Ascending aorta (tissue), 2 donors: ENCODE measurements at regions of chr9 and their contacts with region 1.

Region 1: DNA sequence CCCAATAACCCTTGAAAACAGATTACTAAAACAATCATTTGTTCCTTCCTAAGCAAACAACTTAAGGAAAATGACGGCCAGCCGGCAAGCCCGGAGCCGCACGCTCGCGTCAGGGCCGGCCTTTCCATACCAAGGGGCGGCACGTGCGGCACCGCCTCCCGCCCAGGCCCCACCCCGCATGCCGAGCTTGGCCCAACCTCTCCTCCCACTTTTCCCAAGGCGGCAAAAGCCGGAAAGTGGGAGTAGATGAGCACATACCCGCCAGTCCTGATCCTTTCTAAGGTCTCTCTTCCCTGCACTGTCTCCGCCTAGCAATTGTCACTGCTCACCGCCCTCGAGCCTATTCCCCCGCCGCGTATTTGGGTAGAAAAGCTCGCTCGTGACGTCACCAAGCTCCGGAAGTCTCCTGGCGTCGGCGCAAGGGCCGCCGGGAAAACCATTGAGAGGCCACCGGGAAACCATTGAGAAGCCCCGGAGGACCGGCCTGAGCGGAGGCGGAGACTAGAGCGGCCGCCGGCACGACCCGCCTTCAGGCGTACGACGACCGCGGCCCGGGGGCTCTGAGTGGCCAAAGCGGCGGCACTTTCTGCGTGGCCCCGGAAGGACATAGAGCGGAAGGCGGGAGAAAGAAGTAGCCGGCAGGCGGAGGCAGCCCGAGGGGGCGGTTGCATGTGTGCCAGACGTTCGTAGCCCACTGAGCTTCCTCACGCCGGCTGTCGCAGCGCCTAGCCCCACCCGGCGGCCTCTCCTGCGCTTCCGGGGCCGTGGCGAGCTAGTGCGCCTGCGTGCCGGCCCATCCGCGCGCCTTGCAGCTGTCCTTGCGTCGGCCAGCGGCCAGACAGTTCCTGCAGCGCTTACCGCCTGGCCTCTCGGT is at the starts of genes NCBP1 and TSTD2:
- DNase-seq: peak; percentile 91 to 98
- H3K4me3 ChIP-seq: peak within 1 kb of the TSS; percentile 81 to 89
- H3K27ac ChIP-seq: peak within 1 kb of the TSS; percentile 97 to 98
- H3K4me1 ChIP-seq: peaks cover 10 to 25% of the 10 kb centered on the region in 2 donors
- H3K27me3 ChIP-seq: no peaks in the 10 kb centered on the region
- CTCF ChIP-seq: no peak
- total RNA-seq, gene NCBP1: 5.1 TPM
- total RNA-seq, gene TSTD2: 1.4 TPM

Region 2: DNA sequence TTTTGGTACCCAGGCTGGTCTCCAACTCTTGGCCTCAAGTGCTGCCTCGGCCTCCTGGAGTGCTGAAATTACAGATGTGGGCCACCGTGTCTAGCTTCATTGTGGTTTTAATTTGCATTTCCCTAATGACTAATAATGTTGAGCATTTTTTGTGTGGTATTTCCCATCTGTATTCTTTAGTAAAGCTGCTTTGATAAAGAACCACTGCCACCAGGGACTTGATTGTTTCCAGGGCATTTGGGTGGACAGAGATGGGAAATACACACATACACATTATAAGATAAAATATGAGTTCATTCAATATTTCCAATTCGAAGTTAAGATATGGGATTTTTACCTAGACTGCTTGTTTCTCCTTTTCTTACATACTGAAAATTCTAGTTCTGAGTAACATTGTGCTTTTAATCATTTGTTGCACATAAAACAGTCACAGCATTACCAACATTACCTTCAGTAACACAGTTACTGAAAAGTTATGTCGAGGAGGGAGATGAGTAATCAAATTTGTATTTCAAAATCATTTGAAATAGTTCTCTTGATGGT is 1154.3 kb before region 1 on chr9:
- intact Hi-C with region 1: no loop called
- DNase-seq: no peak
- H3K4me3 ChIP-seq: no peak overlapping the region
- H3K27ac ChIP-seq: peak overlapping the region in 1 of 2 donors; percentile 47
- H3K4me1 ChIP-seq: peaks cover 0 to 15% of the 10 kb centered on the region in 2 donors
- H3K27me3 ChIP-seq: no peaks in the 10 kb centered on the region
- CTCF ChIP-seq: no peak

Region 3: DNA sequence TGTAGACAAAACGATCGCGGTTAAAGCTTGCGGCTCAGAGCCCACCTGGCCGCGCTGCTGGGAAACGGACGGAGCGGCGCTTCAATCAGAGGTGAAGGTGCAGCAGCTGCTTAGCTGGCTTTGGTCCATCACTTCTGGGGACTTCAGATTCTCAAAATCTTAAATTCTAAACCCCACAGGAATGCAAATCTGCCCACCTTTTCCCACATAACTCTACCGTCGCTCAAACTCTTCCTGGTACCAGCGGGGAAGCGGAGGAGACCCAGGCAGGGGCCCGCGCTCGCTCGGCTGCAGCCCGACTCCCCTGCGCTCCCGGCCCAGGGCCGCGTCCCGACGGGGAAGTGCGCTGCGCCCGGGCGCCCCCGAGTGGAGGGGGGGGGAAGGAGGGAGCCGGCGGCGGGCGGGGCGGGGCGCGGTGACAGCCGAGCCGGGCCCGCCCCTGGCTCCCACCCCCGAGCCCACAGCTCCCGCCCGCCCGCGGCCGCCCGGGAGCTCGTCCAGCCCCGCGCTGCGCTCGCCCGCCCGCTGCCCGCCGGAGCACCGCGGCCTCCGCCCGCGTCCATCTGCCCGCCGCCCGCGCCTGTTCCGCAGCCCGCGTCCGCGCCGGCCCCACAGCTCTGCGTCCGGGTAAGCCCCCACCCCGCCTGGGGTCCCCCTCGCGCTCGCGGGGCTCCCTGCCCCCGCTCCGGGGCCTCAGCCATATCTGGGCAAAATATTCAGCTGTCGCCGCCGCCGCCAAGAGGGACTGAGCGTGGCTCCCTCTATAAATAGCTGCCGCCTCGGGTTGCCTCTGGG is 131.8 kb before region 1 on chr9 and contains the start of gene TMOD1:
- intact Hi-C with region 1: loop called (anchors 1 kb)
- DNase-seq: peak in 1 of 2 donors; percentile 86
- H3K4me3 ChIP-seq: peak within 1 kb of the TSS; percentile 84 to 99
- H3K27ac ChIP-seq: peak within 1 kb of the TSS; percentile 88 to 91
- H3K4me1 ChIP-seq: peaks cover 0 to 30% of the 10 kb centered on the region in 2 donors
- H3K27me3 ChIP-seq: no peaks in the 10 kb centered on the region
- CTCF ChIP-seq: peak in 2 of 3 experiments; percentile 28 to 35
- total RNA-seq, gene TMOD1: 17.1 TPM

Region 4: GRCh38 chr9:97696803-97697601 is 63.8 kb after region 1 on chr9 and contains the start of gene XPA:
- intact Hi-C with region 1: loop called (anchors 2 kb)
- DNase-seq: peak; percentile 80 to 98
- H3K4me3 ChIP-seq: peak within 1 kb of the TSS; percentile 73 to 81
- H3K27ac ChIP-seq: peak within 1 kb of the TSS; percentile 93 to 96
- H3K4me1 ChIP-seq: peaks cover 0 to 25% of the 10 kb centered on the region in 2 donors
- H3K27me3 ChIP-seq: no peaks in the 10 kb centered on the region
- CTCF ChIP-seq: no peak
- total RNA-seq, gene XPA: 3.2 TPM

Region 5: GRCh38 chr9:97710356-97711222 is 77.4 kb after region 1 on chr9:
- intact Hi-C with region 1: no loop called
- DNase-seq: no peak
- H3K4me3 ChIP-seq: no peak overlapping the region
- H3K27ac ChIP-seq: no peak overlapping the region
- H3K4me1 ChIP-seq: no peaks in the 10 kb centered on the region
- H3K27me3 ChIP-seq: no peaks in the 10 kb centered on the region
- CTCF ChIP-seq: peak; percentile 56 to 85 (median 77)

Region 6: GRCh38 chr9:98172561-98173003 is 539.4 kb after region 1 on chr9:
- intact Hi-C with region 1: no loop called
- DNase-seq: no peak
- H3K4me3 ChIP-seq: no peak overlapping the region
- H3K27ac ChIP-seq: no peak overlapping the region
- H3K4me1 ChIP-seq: no peaks in the 10 kb centered on the region
- H3K27me3 ChIP-seq: no peaks in the 10 kb centered on the region
- CTCF ChIP-seq: no peak